GM12878 (cell line): ENCODE measurements at regions of chr2 and their contacts with region 1.

Region 1: DNA sequence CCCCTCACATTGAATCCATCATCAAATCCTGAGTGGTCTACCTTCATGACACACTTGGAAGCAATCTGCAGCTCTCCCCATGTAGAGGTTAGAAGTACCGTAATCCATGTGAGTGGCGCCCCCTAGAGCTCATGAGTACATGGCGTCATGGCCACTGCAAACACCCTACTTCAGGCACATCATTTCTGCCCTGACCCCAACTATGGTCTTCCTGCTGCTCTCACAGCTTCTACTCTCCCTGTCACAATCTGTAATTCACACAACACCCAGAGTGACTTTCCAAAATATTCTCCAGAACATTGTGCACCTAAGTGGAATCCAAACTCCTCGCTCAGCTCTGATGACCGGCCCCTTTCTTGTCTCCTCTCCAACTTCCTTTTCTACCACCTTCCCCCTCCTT is 141.9 kb downstream of the ANKRD44 start:
- DNase-seq: no peak
- ATAC-seq: peak; percentile 99
- H3K4me3 ChIP-seq: no peak overlapping the region
- H3K27ac ChIP-seq: no peak overlapping the region
- H3K4me1 ChIP-seq: peaks cover 10% of the 10 kb centered on the region
- H3K27me3 ChIP-seq: no peaks in the 10 kb centered on the region
- CTCF ChIP-seq: peak; percentile 68 to 76 (median 74)
- EP300 ChIP-seq: no peak
- POLR2A ChIP-seq: no peak
- RAD21 ChIP-seq: peak; percentile 82

Region 2: DNA sequence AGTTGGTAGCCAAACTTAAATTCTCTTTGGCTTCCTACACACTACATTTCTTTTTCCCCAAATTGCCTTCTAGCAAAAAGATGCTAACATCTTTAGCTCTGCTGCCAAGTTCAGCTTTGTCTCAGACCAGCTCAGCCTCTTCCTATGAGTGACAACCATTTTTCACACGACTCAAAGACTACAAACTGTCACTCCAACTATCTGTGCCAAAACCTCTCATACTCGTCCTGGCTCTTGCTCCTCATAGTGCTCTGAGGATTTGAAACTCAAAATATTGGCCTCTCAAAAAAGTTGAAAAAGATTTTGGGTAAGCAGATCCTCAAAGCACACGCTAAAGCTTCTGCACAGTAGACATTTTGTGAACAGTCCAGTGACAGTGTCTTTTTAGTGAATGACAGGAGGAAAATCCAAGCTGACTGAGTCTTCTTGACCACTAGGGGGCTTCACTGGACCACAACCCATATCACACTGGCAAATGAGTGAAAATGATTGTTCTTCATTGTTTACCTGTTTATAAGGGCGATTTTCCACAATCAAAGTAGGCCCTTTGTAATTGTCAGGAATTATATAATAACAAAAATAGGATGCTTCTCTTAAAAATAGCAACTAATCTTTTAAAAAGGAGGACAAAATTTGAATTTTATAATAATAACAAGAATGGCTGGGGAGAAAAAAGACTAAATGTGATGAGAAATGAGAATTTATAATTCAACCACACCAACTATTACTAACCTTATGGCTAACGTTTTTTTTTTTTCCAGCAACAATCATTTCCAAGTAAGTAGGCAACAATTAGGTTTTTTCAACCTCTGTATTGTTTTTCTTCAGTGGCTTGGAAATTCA is 156.7 kb before region 1 on chr2:
- CTCF ChIA-PET with region 1: interaction called, 5 read pairs
- POLR2A ChIA-PET with region 1: interaction called, 5 read pairs
- RAD21 ChIA-PET with region 1: interaction called, 3 read pairs
- SMC1A ChIA-PET with region 1: interaction called, 9 read pairs
- in situ Hi-C with region 1: no loop called
- intact Hi-C with region 1: loop called (anchors 5 kb)
- DNase-seq: no peak
- ATAC-seq: peak; percentile 87
- H3K4me3 ChIP-seq: no peak overlapping the region
- H3K27ac ChIP-seq: no peak overlapping the region
- H3K4me1 ChIP-seq: no peaks in the 10 kb centered on the region
- H3K27me3 ChIP-seq: no peaks in the 10 kb centered on the region
- CTCF ChIP-seq: peak; percentile 64 to 75 (median 75)
- EP300 ChIP-seq: no peak
- POLR2A ChIP-seq: no peak
- RAD21 ChIP-seq: peak; percentile 73

Region 3: GRCh38 chr2:197130318-197130717 is 38.4 kb before region 1 on chr2:
- CTCF ChIA-PET with region 1: interaction called, 63 read pairs
- POLR2A ChIA-PET with region 1: interaction called, 3 read pairs
- RAD21 ChIA-PET with region 1: interaction called, 11 read pairs
- SMC1A ChIA-PET with region 1: interaction called, 52 read pairs
- in situ Hi-C with region 1: no loop called
- intact Hi-C with region 1: no loop called
- DNase-seq: peak; percentile 77
- ATAC-seq: peak; percentile 87
- H3K4me3 ChIP-seq: peak overlapping the region; percentile 43; the same call in 1 of the 2 replicates
- H3K27ac ChIP-seq: peak overlapping the region; percentile 86
- H3K4me1 ChIP-seq: peaks cover 29% of the 10 kb centered on the region
- H3K27me3 ChIP-seq: no peaks in the 10 kb centered on the region
- CTCF ChIP-seq: no peak
- EP300 ChIP-seq: no peak; a peak in 1 of 4 replicates
- POLR2A ChIP-seq: no peak
- RAD21 ChIP-seq: no peak

Region 4: GRCh38 chr2:197145471-197146138 is 23.1 kb before region 1 on chr2:
- CTCF ChIA-PET with region 1: interaction called, 19 read pairs
- POLR2A ChIA-PET with region 1: interaction called, 3 read pairs
- RAD21 ChIA-PET with region 1: interaction called, 6 read pairs
- SMC1A ChIA-PET with region 1: interaction called, 19 read pairs
- in situ Hi-C with region 1: no loop called
- intact Hi-C with region 1: no loop called
- DNase-seq: peak; percentile 89
- ATAC-seq: peak; percentile 95
- H3K4me3 ChIP-seq: no peak overlapping the region
- H3K27ac ChIP-seq: peak overlapping the region; percentile 32
- H3K4me1 ChIP-seq: peaks cover 42% of the 10 kb centered on the region
- H3K27me3 ChIP-seq: no peaks in the 10 kb centered on the region
- CTCF ChIP-seq: no peak
- EP300 ChIP-seq: peak; percentile 31 to 69; a peak in 1 of 4 replicates
- POLR2A ChIP-seq: peak; percentile 51; the same call in 1 of the 2 replicates
- RAD21 ChIP-seq: 0 out of 2 replicates have a peak, but pooled peaks have one; percentile 1

Region 5: DNA sequence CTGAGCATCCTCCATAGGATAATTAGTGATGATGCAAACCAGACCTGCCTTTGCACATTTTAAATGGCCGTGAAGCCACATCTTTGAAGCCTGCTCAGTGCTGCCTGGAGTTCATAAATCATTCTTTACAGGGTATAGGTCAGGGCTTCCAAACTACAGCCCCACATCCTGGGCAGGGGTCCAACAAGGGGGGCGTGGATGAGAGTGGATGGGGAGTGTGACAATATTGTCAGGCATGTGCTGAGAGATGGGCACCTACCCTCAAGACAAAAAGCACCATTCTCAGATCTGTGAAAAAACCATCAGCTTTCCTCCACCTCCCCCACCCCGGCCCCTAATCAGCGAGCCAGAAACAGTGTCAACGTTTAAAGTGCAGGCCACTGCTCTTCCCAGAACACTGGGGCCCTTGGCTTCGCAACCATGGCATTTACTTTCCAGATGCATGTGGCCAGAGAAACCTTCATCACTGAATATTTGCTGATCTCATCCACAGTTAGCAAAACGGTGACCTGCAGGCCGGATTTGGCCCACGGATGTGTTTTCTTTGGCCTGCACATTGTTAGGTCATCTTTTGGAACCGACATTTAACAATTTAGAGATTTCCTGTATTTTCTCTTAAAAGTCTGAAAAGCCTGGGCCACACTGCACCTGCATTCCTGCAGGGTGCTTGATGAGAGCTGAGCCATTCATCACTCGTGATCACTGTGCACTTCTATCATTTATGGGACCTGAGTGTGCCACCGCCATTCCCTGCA is 11.2 kb after region 1 on chr2:
- CTCF ChIA-PET with region 1: interaction called, 54 read pairs
- POLR2A ChIA-PET with region 1: interaction called, 3 read pairs
- RAD21 ChIA-PET with region 1: interaction called, 5 read pairs
- SMC1A ChIA-PET with region 1: interaction called, 11 read pairs
- in situ Hi-C with region 1: no loop called
- intact Hi-C with region 1: no loop called
- DNase-seq: no peak
- ATAC-seq: no peak
- H3K4me3 ChIP-seq: no peak overlapping the region
- H3K27ac ChIP-seq: no peak overlapping the region
- H3K4me1 ChIP-seq: no peaks in the 10 kb centered on the region
- H3K27me3 ChIP-seq: no peaks in the 10 kb centered on the region
- CTCF ChIP-seq: no peak
- EP300 ChIP-seq: no peak
- POLR2A ChIP-seq: no peak
- RAD21 ChIP-seq: no peak